PC-9 (cell line): ENCODE measurements at regions of chr5 and their contacts with region 1.

Region 1: GRCh38 chr5:14351845-14352712 is 208.9 kb downstream of the TRIO start:
- DNase-seq: peak in 1 of 2 experiments; percentile 77
- H3K4me3 ChIP-seq: no peak overlapping the region
- H3K27ac ChIP-seq: no peak overlapping the region
- H3K4me1 ChIP-seq: no peaks in the 10 kb centered on the region
- H3K27me3 ChIP-seq: no peaks in the 10 kb centered on the region
- CTCF ChIP-seq: peak; percentile 98

Region 2: DNA sequence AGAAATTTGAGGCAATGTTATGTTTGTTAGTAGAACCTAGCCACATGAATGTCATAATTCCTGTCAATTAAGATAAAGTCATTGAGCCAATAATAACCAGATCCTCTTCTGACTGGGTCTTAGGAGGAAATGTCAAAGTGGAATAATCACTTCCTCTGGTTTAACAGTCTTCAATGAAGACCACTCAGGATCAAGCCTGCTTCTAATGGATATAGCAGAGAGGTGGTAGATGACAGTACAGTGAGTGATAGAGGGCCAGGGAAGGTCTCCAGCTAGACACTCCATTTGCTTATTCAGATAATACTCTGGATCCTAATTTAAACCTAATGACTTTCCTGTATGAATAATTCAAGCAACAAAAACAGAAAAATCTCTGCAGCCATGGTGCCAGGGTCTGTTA is 881.8 kb before region 1 on chr5:
- CTCF ChIA-PET with region 1: interaction called, 12 read pairs
- POLR2A ChIA-PET with region 1: no interaction called
- intact Hi-C with region 1: no loop called
- DNase-seq: no peak
- H3K4me3 ChIP-seq: no peak overlapping the region
- H3K27ac ChIP-seq: no peak overlapping the region
- H3K4me1 ChIP-seq: no peaks in the 10 kb centered on the region
- H3K27me3 ChIP-seq: no peaks in the 10 kb centered on the region
- CTCF ChIP-seq: no peak

Region 3: DNA sequence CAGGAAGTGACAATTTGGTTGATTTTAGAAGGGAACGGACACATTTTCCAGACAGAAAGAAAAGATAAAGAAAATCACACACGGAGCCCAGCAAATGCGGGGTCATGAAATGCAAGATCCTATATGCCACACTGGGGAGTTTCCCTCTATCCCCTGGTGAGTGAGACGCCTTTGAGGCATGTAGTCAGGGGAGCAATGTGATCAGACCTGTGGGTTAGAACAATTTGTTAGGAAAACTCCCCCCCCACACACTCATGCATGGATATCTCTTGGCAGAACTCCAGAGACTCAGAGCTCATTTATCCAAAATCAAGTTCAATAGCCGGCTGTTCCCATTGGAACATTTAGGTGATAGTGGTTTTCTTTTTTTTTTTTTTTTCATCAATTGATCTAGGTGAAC is 280.6 kb before region 1 on chr5:
- CTCF ChIA-PET with region 1: interaction called, 13 read pairs
- POLR2A ChIA-PET with region 1: no interaction called
- intact Hi-C with region 1: no loop called
- DNase-seq: no peak
- H3K4me3 ChIP-seq: no peak overlapping the region
- H3K27ac ChIP-seq: no peak overlapping the region
- H3K4me1 ChIP-seq: no peaks in the 10 kb centered on the region
- H3K27me3 ChIP-seq: no peaks in the 10 kb centered on the region
- CTCF ChIP-seq: no peak

Region 4: GRCh38 chr5:14383923-14384322 is 31.8 kb after region 1 on chr5:
- CTCF ChIA-PET with region 1: interaction called, 12 read pairs
- POLR2A ChIA-PET with region 1: interaction called, 8 read pairs
- intact Hi-C with region 1: no loop called
- DNase-seq: no peak
- H3K4me3 ChIP-seq: no peak overlapping the region
- H3K27ac ChIP-seq: no peak overlapping the region
- H3K4me1 ChIP-seq: no peaks in the 10 kb centered on the region
- H3K27me3 ChIP-seq: no peaks in the 10 kb centered on the region
- CTCF ChIP-seq: no peak

Region 5: GRCh38 chr5:14417276-14417730 is 65.2 kb after region 1 on chr5:
- CTCF ChIA-PET with region 1: no interaction called
- POLR2A ChIA-PET with region 1: no interaction called
- intact Hi-C with region 1: no loop called
- DNase-seq: no peak
- H3K4me3 ChIP-seq: no peak overlapping the region
- H3K27ac ChIP-seq: no peak overlapping the region
- H3K4me1 ChIP-seq: no peaks in the 10 kb centered on the region
- H3K27me3 ChIP-seq: no peaks in the 10 kb centered on the region
- CTCF ChIP-seq: no peak

Region 6: GRCh38 chr5:14644623-14645237 is 292.7 kb after region 1 on chr5:
- CTCF ChIA-PET with region 1: interaction called, 6 read pairs
- POLR2A ChIA-PET with region 1: no interaction called
- intact Hi-C with region 1: loop called (anchors 1 kb)
- DNase-seq: no peak
- H3K4me3 ChIP-seq: no peak overlapping the region
- H3K27ac ChIP-seq: no peak overlapping the region
- H3K4me1 ChIP-seq: no peaks in the 10 kb centered on the region
- H3K27me3 ChIP-seq: peaks cover 3% of the 10 kb centered on the region
- CTCF ChIP-seq: no peak

Region 7: DNA sequence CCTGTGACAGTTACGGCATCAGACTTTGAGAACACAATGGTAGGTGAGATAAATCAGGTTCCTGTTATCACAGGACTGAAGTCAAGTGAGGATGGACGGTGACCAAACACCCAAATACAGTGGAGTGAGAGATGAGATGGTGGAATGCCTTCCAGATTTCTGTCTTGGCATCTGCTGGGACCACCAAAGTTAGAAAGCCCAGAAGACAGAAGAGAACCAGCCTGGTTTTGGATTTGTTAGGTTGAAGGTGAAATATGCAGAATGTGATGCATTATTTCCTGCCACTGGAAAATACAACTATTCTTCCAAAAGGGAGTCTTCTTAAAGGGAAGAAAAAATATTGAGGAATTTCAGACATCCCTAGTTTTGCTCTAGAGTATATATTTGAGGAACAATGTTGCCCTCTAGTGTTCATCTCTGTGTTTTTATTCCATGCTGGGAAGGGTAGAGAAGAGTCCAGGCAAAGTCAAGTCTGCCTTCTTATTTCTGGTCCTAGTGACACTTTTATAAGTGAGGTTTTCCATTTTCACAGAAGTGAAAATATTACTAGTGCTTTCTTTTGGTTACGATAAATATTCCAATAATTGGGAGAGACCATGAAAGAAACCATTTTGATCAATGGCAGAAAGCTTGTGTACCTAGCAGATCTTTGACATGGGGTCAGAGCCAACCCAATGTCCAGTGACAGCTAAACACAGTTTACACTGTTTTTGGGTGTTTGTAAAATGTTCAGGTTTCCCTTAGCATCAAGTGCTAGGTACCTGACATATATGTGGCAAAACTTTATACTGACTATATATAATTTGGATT is 661.8 kb after region 1 on chr5:
- CTCF ChIA-PET with region 1: no interaction called
- POLR2A ChIA-PET with region 1: no interaction called
- intact Hi-C with region 1: loop called (anchors 5 kb)
- DNase-seq: peak in 1 of 2 experiments; percentile 30
- H3K4me3 ChIP-seq: no peak overlapping the region
- H3K27ac ChIP-seq: no peak overlapping the region
- H3K4me1 ChIP-seq: peaks cover 14% of the 10 kb centered on the region
- H3K27me3 ChIP-seq: no peaks in the 10 kb centered on the region
- CTCF ChIP-seq: peak; percentile 84